HepG2 (cell line): ENCODE measurements at regions of chr16 and their contacts with region 1.

Region 1: DNA sequence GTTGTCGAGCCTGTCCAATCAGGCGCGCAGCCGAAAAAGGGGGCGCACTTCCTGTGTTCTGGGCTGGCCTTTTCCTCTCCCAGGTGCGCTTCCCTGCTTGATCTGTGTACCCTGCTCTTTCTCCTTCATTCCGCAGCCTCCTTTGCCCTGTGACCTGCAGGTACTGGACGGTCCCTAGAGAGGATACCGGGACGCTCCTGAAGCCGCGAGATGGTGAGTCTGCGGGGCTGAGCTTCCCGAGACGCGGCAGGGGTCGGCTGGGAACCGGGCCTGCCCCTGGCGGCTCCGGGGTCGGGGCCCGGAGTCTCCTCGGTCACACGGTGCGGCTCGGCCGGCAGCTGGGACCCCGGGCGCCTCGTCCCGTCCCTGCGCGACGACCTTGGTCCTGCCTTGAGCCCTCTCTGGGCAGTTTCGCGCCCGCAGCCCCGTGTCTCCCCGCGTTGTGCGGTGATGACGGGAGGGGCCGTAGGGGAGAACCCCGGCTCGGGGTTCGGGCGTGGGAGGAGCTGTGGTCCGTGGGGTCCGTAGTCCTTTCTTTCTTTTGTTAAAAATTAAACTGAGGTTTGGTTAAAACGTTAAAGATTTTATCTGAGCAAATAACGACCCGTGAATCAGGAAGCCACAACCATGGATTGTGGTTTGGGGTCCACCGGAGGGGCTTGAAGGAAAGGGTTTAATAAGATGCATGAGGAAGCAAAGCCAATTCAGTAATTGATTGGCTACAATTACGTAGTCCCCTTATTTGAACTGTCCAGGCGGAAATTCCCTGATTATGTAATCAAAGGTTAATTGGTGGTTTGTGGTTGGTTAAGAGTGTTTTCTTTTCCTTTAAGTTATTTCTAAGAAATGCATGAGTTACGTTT is 172.8 kb upstream of the ZNF267 start:
- DNase-seq: peak; percentile 90
- ATAC-seq: peak; percentile 90
- H3K4me3 ChIP-seq: peak overlapping the region; percentile 75 to 97 (median 86)
- H3K27ac ChIP-seq: peak overlapping the region; percentile 91
- H3K4me1 ChIP-seq: peaks cover 49% of the 10 kb centered on the region
- H3K27me3 ChIP-seq: no peaks in the 10 kb centered on the region; a peak in 1 of 5 replicates
- CTCF ChIP-seq: peak; percentile 55
- EP300 ChIP-seq: peak; percentile 55 to 76; a peak in 3 of 4 replicates
- POLR2A ChIP-seq: peak; percentile 92 to 95
- RAD21 ChIP-seq: no peak; the same call in 1 of the 2 replicates

Region 2: GRCh38 chr16:31382485-31383161 is 318.1 kb before region 1 on chr16:
- CTCF ChIA-PET with region 1: no interaction called
- POLR2A ChIA-PET with region 1: no interaction called
- in situ Hi-C with region 1: no loop called
- intact Hi-C with region 1: loop called (anchors 5 kb)
- DNase-seq: peak; percentile 42
- ATAC-seq: peak; percentile 90
- H3K4me3 ChIP-seq: no peak overlapping the region
- H3K27ac ChIP-seq: no peak overlapping the region
- H3K4me1 ChIP-seq: peaks cover 9% of the 10 kb centered on the region
- H3K27me3 ChIP-seq: peaks cover 1 to 6% of the 10 kb centered on the region in 2 experiments; a peak in 3 of 5 replicates
- CTCF ChIP-seq: peak; percentile 90
- EP300 ChIP-seq: no peak
- POLR2A ChIP-seq: no peak
- RAD21 ChIP-seq: peak; percentile 75

Region 3: DNA sequence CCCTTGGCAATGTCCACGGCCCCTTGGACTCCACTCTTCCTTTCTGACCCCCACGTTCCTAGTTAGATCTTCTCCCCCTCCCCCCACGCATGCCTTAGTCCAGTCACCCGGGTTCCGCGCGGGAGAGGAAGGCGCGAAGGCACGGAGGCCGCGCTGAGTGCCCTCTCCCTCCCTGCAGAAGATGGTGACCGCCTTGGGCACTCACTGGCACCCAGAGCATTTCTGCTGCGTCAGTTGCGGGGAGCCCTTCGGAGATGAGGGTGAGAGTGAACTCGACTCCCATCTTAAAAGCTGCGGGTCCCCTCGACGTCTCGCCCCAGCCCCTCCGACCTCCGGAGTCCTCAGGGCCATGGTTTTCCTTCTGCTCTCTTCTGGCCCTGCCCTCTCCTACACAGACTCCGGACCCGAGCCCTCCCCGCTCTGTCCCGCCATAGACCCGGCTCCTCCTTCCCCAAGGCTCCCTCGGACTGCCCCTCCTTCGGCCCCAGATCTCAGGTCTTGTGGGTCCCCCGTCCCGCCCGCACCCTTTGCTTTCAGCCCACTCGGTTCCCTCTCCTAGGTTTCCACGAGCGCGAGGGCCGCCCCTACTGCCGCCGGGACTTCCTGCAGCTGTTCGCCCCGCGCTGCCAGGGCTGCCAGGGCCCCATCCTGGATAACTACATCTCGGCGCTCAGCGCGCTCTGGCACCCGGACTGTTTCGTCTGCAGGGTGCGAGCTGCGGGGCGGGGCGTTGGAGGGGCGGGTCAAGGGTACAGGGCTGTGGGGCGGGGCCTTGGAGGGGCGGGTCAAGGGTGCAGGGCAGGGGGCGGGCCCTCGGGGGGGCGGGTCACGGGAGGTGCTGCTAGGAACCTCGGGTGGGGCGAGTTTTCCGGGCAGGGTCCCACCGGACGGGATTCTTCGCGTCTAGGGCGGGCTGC is 224.2 kb before region 1 on chr16:
- CTCF ChIA-PET with region 1: no interaction called
- POLR2A ChIA-PET with region 1: interaction called, 10 read pairs
- in situ Hi-C with region 1: no loop called
- intact Hi-C with region 1: loop called (anchors 5 kb)
- DNase-seq: peak; percentile 63
- ATAC-seq: peak; percentile 63
- H3K4me3 ChIP-seq: peak overlapping the region; percentile 71 to 94 (median 92)
- H3K27ac ChIP-seq: peak overlapping the region; percentile 80
- H3K4me1 ChIP-seq: peaks cover 77% of the 10 kb centered on the region
- H3K27me3 ChIP-seq: peaks cover 0 to 16% of the 10 kb centered on the region in 2 experiments; a peak in 3 of 5 replicates
- CTCF ChIP-seq: no peak
- EP300 ChIP-seq: no peak
- POLR2A ChIP-seq: peak; percentile 8 to 72; a peak in 2 of 4 replicates
- RAD21 ChIP-seq: no peak

Region 4: DNA sequence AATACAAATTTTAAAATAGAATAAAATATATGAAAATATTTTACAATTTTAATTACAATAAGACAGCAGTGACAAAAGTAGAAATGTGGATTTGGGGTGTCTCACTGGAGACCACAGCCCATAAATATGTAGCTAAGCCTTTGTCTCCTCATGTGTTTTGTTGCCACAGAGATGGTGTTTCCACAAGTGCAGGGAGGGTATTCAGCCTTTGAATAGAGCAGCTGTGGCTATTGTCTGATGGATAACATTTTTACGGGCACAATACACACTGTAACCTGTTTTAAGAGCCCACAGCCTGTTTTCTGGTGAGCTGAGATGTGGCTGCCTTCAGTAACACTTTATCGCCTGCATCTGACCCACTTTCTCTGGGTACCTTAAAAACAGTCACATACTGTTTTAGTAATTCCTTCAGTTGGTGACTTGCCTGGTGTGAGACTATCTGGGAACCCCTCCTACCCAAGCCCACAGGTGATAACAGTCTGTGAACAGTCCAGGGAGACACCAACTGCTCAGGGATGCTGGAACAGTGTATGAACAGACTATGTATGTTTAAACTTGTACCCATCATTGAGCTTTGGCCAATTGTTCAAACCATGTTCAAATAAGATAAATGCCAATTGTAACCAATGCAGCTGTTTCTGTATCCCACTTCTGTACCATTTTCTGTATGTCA is 180.9 kb before region 1 on chr16:
- CTCF ChIA-PET with region 1: no interaction called
- POLR2A ChIA-PET with region 1: no interaction called
- in situ Hi-C with region 1: loop called (anchors 5 kb)
- intact Hi-C with region 1: no loop called
- DNase-seq: no peak
- ATAC-seq: no peak
- H3K4me3 ChIP-seq: no peak overlapping the region
- H3K27ac ChIP-seq: no peak overlapping the region
- H3K4me1 ChIP-seq: peaks cover 16% of the 10 kb centered on the region
- H3K27me3 ChIP-seq: peaks cover 0 to 27% of the 10 kb centered on the region in 2 experiments; a peak in 2 of 5 replicates
- CTCF ChIP-seq: no peak
- EP300 ChIP-seq: no peak
- POLR2A ChIP-seq: no peak
- RAD21 ChIP-seq: no peak

Region 5: DNA sequence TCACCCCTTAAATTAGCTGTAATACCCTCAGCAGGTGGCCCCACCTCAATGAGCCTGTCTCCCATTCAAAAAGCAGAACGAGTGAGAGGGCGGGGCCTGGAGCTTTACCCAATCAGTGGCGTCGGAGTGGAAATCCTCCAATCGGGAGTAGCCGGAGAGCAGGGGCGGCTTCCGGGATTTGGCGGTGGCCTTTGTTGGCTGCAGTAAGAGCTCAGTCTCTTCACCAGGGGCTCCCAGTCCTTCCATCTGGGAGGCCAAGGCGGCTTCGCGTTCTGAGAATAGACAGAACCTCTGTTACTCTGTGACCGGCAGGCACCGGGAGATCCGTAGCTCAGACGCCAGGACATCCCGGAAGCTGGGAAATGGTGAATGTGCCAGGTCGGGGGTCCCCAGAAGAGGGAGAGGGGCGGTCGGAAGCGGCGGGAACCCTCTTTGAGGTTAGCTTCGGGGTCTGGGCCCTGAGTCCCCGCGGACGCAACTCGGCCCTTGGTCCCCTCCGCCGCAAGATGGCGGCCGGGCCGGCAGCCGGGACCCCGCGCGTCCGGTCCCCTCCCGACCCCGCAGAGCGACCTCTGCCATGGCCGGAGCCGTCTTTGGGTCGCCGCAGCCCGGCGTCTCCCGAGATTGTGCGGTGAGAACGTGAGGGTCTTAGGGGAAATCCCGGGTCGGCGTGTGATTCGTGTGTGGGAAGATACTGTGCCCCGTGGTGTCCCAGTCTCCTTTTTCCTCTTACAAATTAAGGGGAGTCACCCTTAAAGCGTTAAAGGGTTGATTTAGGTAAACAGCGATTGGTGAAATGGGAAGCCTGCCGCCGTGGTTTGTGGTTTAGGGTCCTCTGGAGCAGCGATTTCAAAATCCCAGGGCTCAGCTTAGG is 12.6 kb after region 1 on chr16:
- CTCF ChIA-PET with region 1: no interaction called
- POLR2A ChIA-PET with region 1: interaction called, 131 read pairs
- in situ Hi-C with region 1: no loop called
- intact Hi-C with region 1: loop called (anchors 1 kb)
- DNase-seq: peak; percentile 97
- ATAC-seq: peak; percentile 86
- H3K4me3 ChIP-seq: peak overlapping the region; percentile 74 to 99 (median 91)
- H3K27ac ChIP-seq: peak overlapping the region; percentile 95
- H3K4me1 ChIP-seq: peaks cover 42% of the 10 kb centered on the region
- H3K27me3 ChIP-seq: no peaks in the 10 kb centered on the region; a peak in 1 of 5 replicates
- CTCF ChIP-seq: peak; percentile 31
- EP300 ChIP-seq: no peak
- POLR2A ChIP-seq: peak; percentile 97 to 99
- RAD21 ChIP-seq: peak; percentile 48